H1 (cell line): ENCODE measurements at regions of chr10 and their contacts with region 1.

Region 1: GRCh38 chr10:71132321-71132810 is 80.0 kb upstream of the UNC5B start:
- DNase-seq: no peak
- H3K4me3 ChIP-seq: no peak overlapping the region
- H3K27ac ChIP-seq: no peak overlapping the region
- H3K4me1 ChIP-seq: peaks cover 2 to 11% (median 6%) of the 10 kb centered on the region in 4 experiments
- H3K27me3 ChIP-seq: no peaks in the 10 kb centered on the region; a peak in 1 of 7 replicates
- CTCF ChIP-seq: no peak
- EP300 ChIP-seq: no peak
- POLR2A ChIP-seq: no peak
- RAD21 ChIP-seq: no peak

Region 2: GRCh38 chr10:71143610-71144009 is 11.2 kb after region 1 on chr10:
- CTCF ChIA-PET with region 1: interaction called, 12 read pairs
- POLR2A ChIA-PET with region 1: no interaction called
- DNase-seq: no peak
- H3K4me3 ChIP-seq: no peak overlapping the region
- H3K27ac ChIP-seq: no peak overlapping the region
- H3K4me1 ChIP-seq: no peaks in the 10 kb centered on the region
- H3K27me3 ChIP-seq: peaks cover 0 to 2% (median 0%) of the 10 kb centered on the region in 4 experiments; a peak in 1 of 7 replicates
- CTCF ChIP-seq: no peak
- EP300 ChIP-seq: no peak
- POLR2A ChIP-seq: no peak
- RAD21 ChIP-seq: no peak

Region 3: DNA sequence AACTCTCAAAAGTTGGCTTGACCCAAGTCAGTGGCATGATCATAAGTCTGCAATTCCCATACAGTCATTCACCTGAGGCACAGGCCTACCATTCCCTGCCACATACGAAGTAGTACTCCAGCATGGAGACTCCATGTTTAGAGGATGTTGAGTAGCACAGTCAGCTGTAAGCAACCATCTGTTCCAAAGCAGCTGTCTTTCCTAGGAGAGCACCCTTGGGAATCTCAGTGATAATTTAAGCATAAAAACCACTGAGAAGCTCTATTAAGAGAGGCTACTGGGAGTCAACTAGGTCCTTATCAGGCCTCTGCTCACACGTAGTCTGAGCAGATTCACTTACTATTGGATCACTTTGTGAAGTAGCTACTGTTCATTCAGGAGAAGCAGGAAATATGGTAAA is 18.4 kb after region 1 on chr10:
- CTCF ChIA-PET with region 1: interaction called, 20 read pairs
- POLR2A ChIA-PET with region 1: no interaction called
- DNase-seq: no peak
- H3K4me3 ChIP-seq: no peak overlapping the region
- H3K27ac ChIP-seq: no peak overlapping the region
- H3K4me1 ChIP-seq: no peaks in the 10 kb centered on the region
- H3K27me3 ChIP-seq: no peaks in the 10 kb centered on the region
- CTCF ChIP-seq: no peak
- EP300 ChIP-seq: no peak
- POLR2A ChIP-seq: no peak
- RAD21 ChIP-seq: no peak